ENCODE measurements at regions of chr1 and their contacts with region 1.

Region 1: DNA sequence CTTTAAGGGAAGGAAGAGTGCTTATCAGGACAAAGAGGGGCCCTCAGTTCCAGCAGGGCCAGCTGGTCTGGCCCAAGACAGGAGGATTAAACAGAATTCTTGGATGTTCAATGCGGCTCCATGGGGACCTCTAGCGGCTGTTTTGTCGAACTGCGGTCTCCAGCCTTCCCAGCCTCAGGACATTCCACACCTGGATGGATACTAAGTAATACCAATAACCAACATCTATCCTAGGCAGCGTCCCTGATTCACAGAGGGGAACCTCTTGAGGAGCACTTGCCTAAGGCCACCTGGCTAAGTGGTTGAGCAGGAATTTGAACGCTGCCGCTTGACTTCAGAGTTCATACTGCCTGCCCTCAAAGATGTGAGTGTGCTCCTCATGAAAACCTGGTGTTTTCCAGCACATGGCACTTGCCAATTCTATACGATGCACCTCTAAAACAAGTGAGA is 15.5 kb upstream of the CD247 start:
- DNase-seq: peak; percentile 76
- H3K4me3 Mint-ChIP-seq: no peak overlapping the region
- H3K27ac Mint-ChIP-seq: no peak overlapping the region
- H3K4me1 Mint-ChIP-seq: peaks cover 4% of the 10 kb centered on the region
- H3K27me3 Mint-ChIP-seq: no peaks in the 10 kb centered on the region

Region 2: DNA sequence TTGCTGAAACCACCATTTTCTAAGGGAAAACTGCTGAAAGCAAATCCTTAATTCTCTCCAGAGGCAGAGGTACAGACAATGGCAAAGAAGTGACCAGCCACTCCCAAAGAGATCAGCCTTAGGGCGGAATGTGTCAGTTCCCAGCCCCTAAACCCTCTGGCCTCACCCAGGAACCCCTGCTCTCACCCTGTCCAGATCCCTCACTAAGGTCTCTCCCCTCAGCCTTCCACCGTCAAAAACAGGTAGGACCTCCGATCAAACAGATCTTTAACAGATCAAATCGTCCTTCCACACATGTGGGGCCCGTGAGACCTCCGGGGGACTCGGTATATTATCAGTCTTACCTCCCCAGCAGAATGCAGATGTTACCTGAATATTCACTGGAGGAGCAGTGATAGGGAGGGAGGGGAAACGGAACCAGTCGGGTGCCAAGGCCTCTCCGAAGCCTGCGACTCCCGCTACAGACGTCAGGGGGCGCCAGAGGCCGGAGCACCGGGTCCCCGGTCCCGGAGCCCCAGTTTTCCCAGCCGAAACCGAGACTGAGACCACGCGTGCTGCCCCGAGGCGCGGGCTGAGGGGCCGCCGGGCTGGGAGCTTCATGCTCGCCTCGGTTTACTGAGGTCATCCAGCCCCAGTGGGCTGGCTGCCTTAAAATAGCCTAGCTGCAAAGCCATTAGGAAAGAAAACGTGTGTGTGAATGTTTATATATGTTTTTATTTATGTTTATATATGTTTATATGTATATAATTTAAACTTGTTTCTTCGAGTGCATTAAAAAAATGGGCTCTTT is 467.3 kb before region 1 on chr1:
- CTCF ChIA-PET with region 1: interaction called, 10 read pairs
- POLR2A ChIA-PET with region 1: no interaction called
- intact Hi-C with region 1: no loop called
- DNase-seq: peak; percentile 83
- H3K4me3 Mint-ChIP-seq: peak overlapping the region; percentile 30
- H3K27ac Mint-ChIP-seq: no peak overlapping the region
- H3K4me1 Mint-ChIP-seq: peaks cover 2% of the 10 kb centered on the region
- H3K27me3 Mint-ChIP-seq: no peaks in the 10 kb centered on the region

Region 3: DNA sequence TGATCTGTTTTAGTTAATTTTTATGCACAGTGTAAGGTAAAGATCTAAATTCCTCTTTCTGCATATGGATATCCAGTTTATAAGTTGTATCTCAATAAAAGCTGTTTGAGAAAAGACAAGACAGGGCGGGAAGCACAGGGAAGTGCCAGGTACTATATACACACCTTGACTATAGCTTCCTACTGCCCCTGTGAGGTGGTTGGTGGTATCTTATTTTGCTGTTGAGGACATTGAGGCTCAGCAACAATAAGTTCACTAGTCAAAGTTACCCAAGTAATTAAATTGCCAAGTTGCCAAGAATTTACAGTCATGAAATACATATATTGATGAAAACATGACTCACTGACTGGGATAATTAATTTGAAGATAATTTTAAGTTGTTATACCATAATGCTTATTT is 124.7 kb before region 1 on chr1:
- CTCF ChIA-PET with region 1: interaction called, 17 read pairs
- POLR2A ChIA-PET with region 1: no interaction called
- intact Hi-C with region 1: no loop called
- DNase-seq: no peak
- H3K4me3 Mint-ChIP-seq: no peak overlapping the region
- H3K27ac Mint-ChIP-seq: no peak overlapping the region
- H3K4me1 Mint-ChIP-seq: peaks cover 22% of the 10 kb centered on the region
- H3K27me3 Mint-ChIP-seq: no peaks in the 10 kb centered on the region

Region 4: GRCh38 chr1:167447521-167448136 is 86.2 kb before region 1 on chr1:
- CTCF ChIA-PET with region 1: interaction called, 62 read pairs
- POLR2A ChIA-PET with region 1: no interaction called
- intact Hi-C with region 1: loop called (anchors 1 kb)
- DNase-seq: peak; percentile 90
- H3K4me3 Mint-ChIP-seq: peak overlapping the region; percentile 56
- H3K27ac Mint-ChIP-seq: peak overlapping the region; percentile 95
- H3K4me1 Mint-ChIP-seq: peaks cover 74% of the 10 kb centered on the region
- H3K27me3 Mint-ChIP-seq: no peaks in the 10 kb centered on the region

Region 5: GRCh38 chr1:167499664-167500101 is 34.2 kb before region 1 on chr1:
- CTCF ChIA-PET with region 1: interaction called, 33 read pairs
- POLR2A ChIA-PET with region 1: no interaction called
- intact Hi-C with region 1: no loop called
- DNase-seq: peak; percentile 54
- H3K4me3 Mint-ChIP-seq: no peak overlapping the region
- H3K27ac Mint-ChIP-seq: peak overlapping the region; percentile 87
- H3K4me1 Mint-ChIP-seq: peaks cover 99% of the 10 kb centered on the region
- H3K27me3 Mint-ChIP-seq: no peaks in the 10 kb centered on the region

Region 6: GRCh38 chr1:167553136-167554027 is 19.5 kb after region 1 on chr1 and contains the start of gene CREG1:
- CTCF ChIA-PET with region 1: interaction called, 47 read pairs
- POLR2A ChIA-PET with region 1: no interaction called
- intact Hi-C with region 1: no loop called
- DNase-seq: peak; percentile 94
- H3K4me3 Mint-ChIP-seq: peak within 1 kb of the TSS; percentile 84
- H3K27ac Mint-ChIP-seq: no peak within 1 kb of the TSS
- H3K4me1 Mint-ChIP-seq: peaks cover 35% of the 10 kb centered on the region
- H3K27me3 Mint-ChIP-seq: no peaks in the 10 kb centered on the region
- total RNA-seq, gene CREG1: 13.5 to 14.6 TPM

Region 7: DNA sequence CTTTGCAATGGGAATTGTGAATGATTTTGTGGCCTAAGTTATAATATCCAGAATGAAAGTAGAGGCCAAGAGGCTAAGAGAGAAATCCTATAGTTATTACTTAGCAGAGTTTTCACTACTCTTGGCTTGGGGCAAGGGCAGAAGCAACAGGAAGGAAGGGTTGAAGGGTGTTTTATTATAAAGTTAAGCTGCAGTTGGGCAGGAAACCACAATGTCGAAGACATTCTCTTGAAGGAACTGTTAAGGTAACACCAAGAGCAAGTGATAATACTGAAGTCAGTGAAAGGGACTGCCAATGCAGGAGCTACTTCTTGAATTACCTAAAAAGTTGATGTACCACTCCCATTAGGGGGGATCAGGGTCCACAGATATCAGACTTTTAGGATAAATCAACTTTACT is 1001.7 kb after region 1 on chr1:
- CTCF ChIA-PET with region 1: no interaction called
- POLR2A ChIA-PET with region 1: no interaction called
- intact Hi-C with region 1: no loop called
- DNase-seq: no peak
- H3K4me3 Mint-ChIP-seq: no peak overlapping the region
- H3K27ac Mint-ChIP-seq: peak overlapping the region; percentile 25
- H3K4me1 Mint-ChIP-seq: peaks cover 64% of the 10 kb centered on the region
- H3K27me3 Mint-ChIP-seq: no peaks in the 10 kb centered on the region

Measured in activated CD4-positive, alpha-beta memory T cell treated with anti-CD3 and anti-CD28 coated beads for 36 hours (primary cell).